ENCODE measurements at regions of chr14 and their contacts with region 1.

Region 1: DNA sequence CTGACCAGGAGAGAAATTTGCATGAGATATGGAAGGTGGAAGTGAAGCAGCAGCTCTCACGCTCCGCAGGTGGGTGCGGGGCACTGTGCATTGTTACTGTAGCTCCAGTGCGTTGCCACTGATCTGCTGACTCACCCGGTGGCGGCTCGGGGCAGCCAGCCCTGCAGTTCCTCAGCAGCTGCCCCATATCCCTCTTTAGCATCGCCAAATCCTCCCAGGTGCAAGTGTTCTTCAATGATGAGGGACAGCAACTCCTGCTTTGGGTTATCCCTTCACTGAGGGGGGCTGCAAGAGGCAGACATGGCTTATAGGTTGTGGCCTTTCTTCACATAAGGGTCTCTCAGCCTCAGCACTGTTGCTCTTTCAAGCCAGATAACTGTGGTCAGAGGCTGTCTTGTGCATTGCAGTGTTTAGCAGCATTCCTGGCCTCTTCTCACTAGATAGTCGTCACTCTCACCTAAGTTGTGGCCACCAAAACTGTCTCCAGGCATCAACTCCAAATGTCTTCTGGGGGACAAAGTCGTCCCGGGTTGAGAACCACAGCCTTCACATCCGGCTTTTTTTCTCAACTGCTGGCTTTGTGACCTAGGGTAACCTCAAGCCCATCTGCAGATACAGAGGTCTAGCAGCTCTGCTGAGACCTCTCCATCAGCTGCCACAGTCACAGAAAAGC is 180.8 kb downstream of the EFCAB11 start:
- DNase-seq: peak; percentile 26 to 64 (median 62)
- ATAC-seq: peak in 1 of 2 donors; percentile 57
- H3K4me3 ChIP-seq: no peak overlapping the region
- H3K27ac ChIP-seq: no peak overlapping the region
- H3K4me1 ChIP-seq: no peaks in the 10 kb centered on the region
- H3K27me3 ChIP-seq: no peaks in the 10 kb centered on the region

Region 2: GRCh38 chr14:89033756-89034155 is 740.0 kb before region 1 on chr14:
- intact Hi-C with region 1: loop called in 2 of 4 experiments (anchors 10 kb)
- DNase-seq: no peak
- ATAC-seq: peak in 1 of 2 donors; percentile 63
- H3K4me3 ChIP-seq: no peak overlapping the region
- H3K27ac ChIP-seq: no peak overlapping the region
- H3K4me1 ChIP-seq: no peaks in the 10 kb centered on the region
- H3K27me3 ChIP-seq: no peaks in the 10 kb centered on the region

Region 3: DNA sequence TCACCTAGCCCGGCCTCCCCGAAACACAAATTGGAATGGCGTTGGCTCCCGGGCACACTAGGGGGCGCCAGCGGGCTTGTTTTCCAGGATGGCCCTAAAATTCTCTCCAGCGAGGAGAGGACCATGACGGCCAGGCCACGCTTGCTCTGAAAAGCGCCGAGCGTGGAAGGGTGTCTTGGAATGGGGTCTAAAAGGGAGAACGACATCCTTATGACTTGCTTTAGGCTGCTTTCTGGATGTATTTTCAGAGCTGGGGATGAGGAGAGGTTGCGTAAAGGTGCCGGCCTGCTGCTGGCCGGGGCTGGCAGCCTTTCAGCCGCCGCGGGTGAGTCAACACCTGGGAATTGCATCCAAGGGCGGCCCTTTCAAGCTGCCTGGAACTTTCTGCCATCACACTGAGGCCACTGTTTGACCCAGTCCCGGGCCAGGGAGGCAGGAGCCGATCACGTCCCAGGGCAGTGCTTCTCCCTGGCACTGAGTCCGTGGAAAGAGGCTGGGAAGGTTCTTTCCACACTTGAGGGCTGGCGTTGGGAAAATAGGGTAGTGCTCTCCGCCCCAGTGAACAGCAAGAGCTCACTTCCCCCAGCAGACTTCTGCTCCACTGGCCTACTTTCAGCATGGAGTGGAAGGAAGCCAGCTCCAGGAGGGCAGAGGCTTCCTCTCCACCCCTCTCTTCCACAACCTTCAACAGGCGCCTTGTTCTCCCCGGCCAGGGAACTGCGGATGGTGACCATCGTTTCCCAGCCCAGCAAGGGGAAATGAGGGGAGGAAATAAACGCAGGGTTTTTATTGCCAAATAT is 733.1 kb before region 1 on chr14:
- intact Hi-C with region 1: loop called in 3 of 4 experiments (anchors 10 kb)
- DNase-seq: peak; percentile 91 to 95 (median 94)
- ATAC-seq: peak; percentile 94 to 97
- H3K4me3 ChIP-seq: peak overlapping the region; percentile 23
- H3K27ac ChIP-seq: peak overlapping the region; percentile 79
- H3K4me1 ChIP-seq: peaks cover 6% of the 10 kb centered on the region
- H3K27me3 ChIP-seq: no peaks in the 10 kb centered on the region

Region 4: GRCh38 chr14:89397569-89398230 is 376.1 kb before region 1 on chr14:
- intact Hi-C with region 1: no loop called
- DNase-seq: no peak
- ATAC-seq: no peak
- H3K4me3 ChIP-seq: no peak overlapping the region
- H3K27ac ChIP-seq: no peak overlapping the region
- H3K4me1 ChIP-seq: peaks cover 10% of the 10 kb centered on the region
- H3K27me3 ChIP-seq: no peaks in the 10 kb centered on the region

Measured in right cardiac atrium (tissue), 5 donors.